ENCODE measurements at regions of chr12 and their contacts with region 1.

Region 1: DNA sequence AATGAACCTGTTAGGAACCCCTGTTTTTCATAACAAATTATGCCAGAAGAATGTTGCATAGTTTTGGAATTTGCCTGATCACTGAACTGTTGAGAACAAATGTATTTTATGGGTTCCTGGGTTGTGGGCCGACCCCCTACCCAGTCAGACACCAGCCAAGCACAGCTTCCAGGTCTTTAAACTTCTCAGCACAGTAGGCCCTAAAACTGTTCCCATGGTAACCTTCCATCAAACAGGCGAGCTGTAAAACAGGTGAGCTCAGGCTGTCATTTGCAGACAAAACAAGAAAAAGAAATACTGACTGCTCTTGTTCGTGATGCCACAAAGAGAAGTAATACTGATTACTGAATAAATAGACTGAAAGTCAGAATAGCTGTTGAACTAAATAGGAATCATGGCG is 147.0 kb downstream of the PTPRO start:
- DNase-seq: no peak
- H3K4me3 ChIP-seq: no peak overlapping the region
- H3K27ac ChIP-seq: no peak overlapping the region
- H3K4me1 ChIP-seq: no peaks in the 10 kb centered on the region
- H3K27me3 ChIP-seq: no peaks in the 10 kb centered on the region
- CTCF ChIP-seq: no peak
- EP300 ChIP-seq: no peak
- POLR2A ChIP-seq: no peak

Region 2: GRCh38 chr12:15404485-15404884 is 64.9 kb before region 1 on chr12:
- intact Hi-C with region 1: no loop called
- DNase-seq: no peak
- H3K4me3 ChIP-seq: no peak overlapping the region
- H3K27ac ChIP-seq: no peak overlapping the region
- H3K4me1 ChIP-seq: no peaks in the 10 kb centered on the region
- H3K27me3 ChIP-seq: no peaks in the 10 kb centered on the region
- CTCF ChIP-seq: no peak
- EP300 ChIP-seq: no peak
- POLR2A ChIP-seq: no peak

Region 3: DNA sequence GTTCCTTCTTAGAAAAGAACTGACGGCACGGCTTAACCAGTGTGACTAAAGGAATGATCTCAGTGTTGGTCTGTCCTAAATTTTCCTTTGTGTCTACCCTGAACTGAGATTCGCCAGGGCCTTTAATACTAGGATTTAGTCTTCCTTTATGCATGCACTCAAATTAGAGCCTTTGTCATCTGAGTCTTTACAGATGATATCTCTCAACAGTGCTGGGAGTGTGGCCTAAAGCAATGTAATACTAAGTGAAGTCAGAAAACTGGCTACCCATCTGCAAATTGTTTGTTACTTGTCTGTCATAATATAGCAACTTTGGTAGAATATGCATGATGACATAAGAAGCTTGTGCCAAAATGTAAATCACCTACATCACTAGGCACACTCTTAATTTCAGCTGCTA is 51.7 kb before region 1 on chr12:
- intact Hi-C with region 1: loop called in 1 of 4 experiments (anchors 2 kb)
- DNase-seq: no peak
- H3K4me3 ChIP-seq: no peak overlapping the region
- H3K27ac ChIP-seq: no peak overlapping the region
- H3K4me1 ChIP-seq: no peaks in the 10 kb centered on the region
- H3K27me3 ChIP-seq: no peaks in the 10 kb centered on the region
- CTCF ChIP-seq: no peak
- EP300 ChIP-seq: no peak
- POLR2A ChIP-seq: no peak

Measured in ovary (tissue), 10 donors.